ENCODE measurements at regions of chr20 and their contacts with region 1.

Region 1: DNA sequence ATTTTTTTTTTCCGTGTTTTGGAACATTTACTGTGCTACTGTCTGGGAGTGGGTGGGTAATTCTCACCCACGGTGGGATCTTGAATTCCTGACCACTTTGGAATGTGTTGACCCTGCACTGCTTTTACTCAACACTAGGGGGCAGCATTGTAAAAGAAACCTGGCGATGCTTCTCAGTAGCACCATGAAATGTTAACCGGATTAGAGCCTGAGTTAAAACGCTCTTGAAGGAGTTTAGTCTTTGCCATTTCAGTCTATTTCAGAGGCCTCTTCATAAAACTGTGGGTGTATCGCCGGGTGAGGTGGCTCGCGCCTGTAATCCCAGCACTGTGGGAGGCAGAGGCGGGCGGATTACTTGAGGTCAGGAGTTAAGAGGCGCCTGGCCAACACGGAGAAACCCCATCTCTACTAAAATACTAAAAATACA is 114.4 kb upstream of the PRND start:
- DNase-seq: peak; percentile 76
- H3K4me3 ChIP-seq: no peak overlapping the region
- H3K27ac ChIP-seq: no peak overlapping the region
- H3K4me1 ChIP-seq: peaks cover 13% of the 10 kb centered on the region
- H3K27me3 ChIP-seq: no peaks in the 10 kb centered on the region

Region 2: DNA sequence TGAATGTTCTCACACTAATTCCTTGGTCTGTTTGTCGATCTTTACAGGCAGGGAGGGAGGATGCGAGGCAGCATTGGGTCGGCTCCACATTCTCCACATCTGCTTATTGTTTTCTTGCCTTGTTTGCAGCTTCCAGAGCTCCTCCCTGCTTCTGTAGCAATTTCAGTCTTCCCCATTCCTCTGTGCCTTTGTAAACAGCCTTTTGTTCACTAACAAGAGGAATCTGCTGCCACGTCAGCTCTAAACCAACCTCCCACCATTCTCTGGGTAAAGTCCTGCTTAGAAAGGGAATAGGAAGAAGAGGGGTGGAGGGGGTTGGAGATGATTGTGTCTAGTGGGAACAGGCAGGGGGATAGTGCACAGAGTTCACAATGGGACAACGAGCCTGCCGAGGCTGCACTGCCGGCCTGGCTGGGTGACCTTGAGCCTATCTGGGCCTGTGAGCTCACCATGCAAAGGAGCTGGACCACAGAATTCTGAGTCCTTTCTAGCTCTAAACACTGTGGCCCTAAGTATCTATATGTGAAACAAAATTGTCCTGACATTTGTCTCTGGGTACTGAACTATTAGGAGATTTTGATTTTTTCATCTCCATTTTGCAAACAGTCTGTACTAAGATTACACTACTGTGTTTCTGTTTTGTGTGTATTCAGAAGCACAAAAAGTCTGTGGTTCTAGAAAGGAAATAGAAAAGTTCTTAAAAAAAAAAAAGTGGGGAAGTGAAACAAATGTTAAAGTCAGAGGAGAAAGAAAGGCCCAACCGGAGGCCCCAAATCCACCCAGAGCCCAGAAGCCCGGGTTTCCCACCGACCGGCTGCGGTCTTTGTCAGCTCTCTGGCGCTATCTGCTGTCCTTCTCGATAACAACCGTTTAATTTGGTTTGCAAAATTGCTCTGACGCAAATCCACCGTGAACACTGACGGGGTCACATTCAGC is 113.0 kb after region 1 on chr20:
- in situ Hi-C with region 1: loop called (anchors 5 kb)
- DNase-seq: peak; percentile 94
- H3K4me3 ChIP-seq: no peak overlapping the region
- H3K27ac ChIP-seq: peak overlapping the region; percentile 91
- H3K4me1 ChIP-seq: peaks cover 11% of the 10 kb centered on the region
- H3K27me3 ChIP-seq: no peaks in the 10 kb centered on the region

Region 3: DNA sequence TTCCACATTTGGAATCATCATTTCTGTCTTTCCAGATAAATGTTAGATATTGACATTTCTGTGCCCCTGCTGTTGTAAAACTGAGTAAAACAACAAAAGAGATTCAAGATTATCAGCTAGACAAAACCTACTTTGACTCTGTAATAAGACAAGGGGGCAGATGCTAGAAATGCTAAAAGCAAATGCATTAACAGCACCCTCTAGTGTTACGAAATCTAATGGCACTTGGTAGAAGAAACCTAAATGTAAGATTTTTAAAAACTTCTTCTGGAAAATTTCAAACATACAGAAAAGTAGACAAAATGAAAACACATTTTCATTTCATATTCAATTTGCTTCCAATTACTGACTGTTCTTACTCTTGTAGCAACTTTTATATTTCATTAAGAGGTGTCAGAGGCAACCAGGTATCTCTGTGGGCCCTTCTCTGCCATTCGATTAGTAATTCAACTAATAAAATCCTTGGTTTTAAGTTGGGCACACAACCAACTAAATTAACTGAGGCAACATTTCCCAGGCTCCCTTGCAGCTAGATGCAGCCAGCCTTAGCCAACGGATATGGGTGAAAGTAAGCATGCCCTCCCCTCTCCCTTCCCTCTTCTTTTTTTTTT is 349.0 kb after region 1 on chr20:
- in situ Hi-C with region 1: loop called (anchors 25 kb)
- DNase-seq: peak; percentile 71
- H3K4me3 ChIP-seq: no peak overlapping the region
- H3K27ac ChIP-seq: no peak overlapping the region
- H3K4me1 ChIP-seq: 0 out of 2 replicates have a peak, but pooled peaks cover 7% of the 10 kb centered on the region
- H3K27me3 ChIP-seq: no peaks in the 10 kb centered on the region